IMR-90 (cell line): ENCODE measurements at regions of chr7 and their contacts with region 1.

Region 1: GRCh38 chr7:40014376-40014775 is 64.3 kb downstream of the CDK13 start:
- DNase-seq: no peak
- ATAC-seq: no peak
- H3K4me3 ChIP-seq: no peak overlapping the region
- H3K27ac ChIP-seq: no peak overlapping the region
- H3K4me1 ChIP-seq: peaks cover 4% of the 10 kb centered on the region; the same call in 1 of the 2 replicates
- H3K27me3 ChIP-seq: no peaks in the 10 kb centered on the region
- CTCF ChIP-seq: no peak
- POLR2A ChIP-seq: no peak
- RAD21 ChIP-seq: no peak

Region 2: GRCh38 chr7:40047661-40048060 is 33.3 kb after region 1 on chr7:
- CTCF ChIA-PET with region 1: no interaction called
- POLR2A ChIA-PET with region 1: no interaction called
- dilution Hi-C with region 1: no loop called
- in situ Hi-C with region 1: no loop called
- intact Hi-C with region 1: loop called (anchors 5 kb)
- DNase-seq: no peak
- ATAC-seq: no peak
- H3K4me3 ChIP-seq: no peak overlapping the region
- H3K27ac ChIP-seq: no peak overlapping the region
- H3K4me1 ChIP-seq: no peaks in the 10 kb centered on the region
- H3K27me3 ChIP-seq: no peaks in the 10 kb centered on the region
- CTCF ChIP-seq: peak; percentile 8; the same call in 1 of the 2 replicates
- POLR2A ChIP-seq: no peak
- RAD21 ChIP-seq: no peak